Activated CD4-positive, alpha-beta memory T cell treated with anti-CD3 and anti-CD28 coated beads for 36 hours (primary cell): ENCODE measurements at regions of chr9 and their contacts with region 1.

Region 1: GRCh38 chr9:124708633-124709291 is 62.3 kb downstream of the NR6A1 start:
- DNase-seq: no peak
- H3K4me3 Mint-ChIP-seq: no peak overlapping the region
- H3K27ac Mint-ChIP-seq: no peak overlapping the region
- H3K4me1 Mint-ChIP-seq: no peaks in the 10 kb centered on the region
- H3K27me3 Mint-ChIP-seq: peaks cover 11% of the 10 kb centered on the region

Region 2: GRCh38 chr9:124420991-124421543 is 287.7 kb before region 1 on chr9:
- CTCF ChIA-PET with region 1: interaction called, 3 read pairs
- POLR2A ChIA-PET with region 1: no interaction called
- intact Hi-C with region 1: loop called (anchors 1 kb)
- DNase-seq: no peak
- H3K4me3 Mint-ChIP-seq: no peak overlapping the region
- H3K27ac Mint-ChIP-seq: no peak overlapping the region
- H3K4me1 Mint-ChIP-seq: peaks cover 2% of the 10 kb centered on the region
- H3K27me3 Mint-ChIP-seq: no peaks in the 10 kb centered on the region

Region 3: DNA sequence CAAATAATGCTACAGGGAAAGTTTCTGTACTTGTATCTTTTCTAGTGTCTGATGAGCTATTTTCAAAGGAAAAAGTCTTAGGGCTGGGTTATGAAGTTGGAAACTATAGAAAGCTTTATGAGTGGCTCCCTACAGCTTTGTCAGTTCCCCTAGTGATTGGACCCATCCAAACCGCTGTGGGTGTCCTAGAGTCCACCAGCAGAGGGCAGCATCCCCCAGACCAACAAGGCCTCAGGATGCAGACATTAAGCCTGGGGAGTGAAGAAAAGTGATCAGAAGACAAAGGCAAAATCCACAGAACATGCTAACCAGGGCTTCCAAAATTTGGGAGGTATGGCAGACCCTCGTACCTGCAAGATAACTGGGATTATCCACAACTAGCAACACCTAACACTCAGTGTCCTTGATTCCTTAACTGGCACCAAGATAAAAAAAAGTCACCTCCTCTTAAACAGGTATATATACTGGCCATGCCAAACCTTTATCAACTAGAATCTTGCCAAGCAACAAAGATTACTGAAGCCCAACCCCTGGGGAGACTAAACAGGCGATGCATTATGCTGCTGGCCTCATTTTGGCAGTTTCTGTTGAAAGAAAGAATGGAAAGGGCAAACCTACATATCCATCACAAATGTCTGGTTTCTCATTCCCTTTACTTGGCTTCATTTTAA is 91.2 kb before region 1 on chr9:
- CTCF ChIA-PET with region 1: interaction called, 83 read pairs
- POLR2A ChIA-PET with region 1: no interaction called
- intact Hi-C with region 1: loop called (anchors 1 kb)
- DNase-seq: peak; percentile 82
- H3K4me3 Mint-ChIP-seq: no peak overlapping the region
- H3K27ac Mint-ChIP-seq: no peak overlapping the region
- H3K4me1 Mint-ChIP-seq: no peaks in the 10 kb centered on the region
- H3K27me3 Mint-ChIP-seq: peaks cover 4% of the 10 kb centered on the region

Region 4: GRCh38 chr9:124743686-124744348 is 35.1 kb after region 1 on chr9:
- CTCF ChIA-PET with region 1: interaction called, 11 read pairs
- POLR2A ChIA-PET with region 1: no interaction called
- intact Hi-C with region 1: no loop called
- DNase-seq: no peak
- H3K4me3 Mint-ChIP-seq: no peak overlapping the region
- H3K27ac Mint-ChIP-seq: no peak overlapping the region
- H3K4me1 Mint-ChIP-seq: peaks cover 5% of the 10 kb centered on the region
- H3K27me3 Mint-ChIP-seq: peaks cover 10% of the 10 kb centered on the region

Region 5: DNA sequence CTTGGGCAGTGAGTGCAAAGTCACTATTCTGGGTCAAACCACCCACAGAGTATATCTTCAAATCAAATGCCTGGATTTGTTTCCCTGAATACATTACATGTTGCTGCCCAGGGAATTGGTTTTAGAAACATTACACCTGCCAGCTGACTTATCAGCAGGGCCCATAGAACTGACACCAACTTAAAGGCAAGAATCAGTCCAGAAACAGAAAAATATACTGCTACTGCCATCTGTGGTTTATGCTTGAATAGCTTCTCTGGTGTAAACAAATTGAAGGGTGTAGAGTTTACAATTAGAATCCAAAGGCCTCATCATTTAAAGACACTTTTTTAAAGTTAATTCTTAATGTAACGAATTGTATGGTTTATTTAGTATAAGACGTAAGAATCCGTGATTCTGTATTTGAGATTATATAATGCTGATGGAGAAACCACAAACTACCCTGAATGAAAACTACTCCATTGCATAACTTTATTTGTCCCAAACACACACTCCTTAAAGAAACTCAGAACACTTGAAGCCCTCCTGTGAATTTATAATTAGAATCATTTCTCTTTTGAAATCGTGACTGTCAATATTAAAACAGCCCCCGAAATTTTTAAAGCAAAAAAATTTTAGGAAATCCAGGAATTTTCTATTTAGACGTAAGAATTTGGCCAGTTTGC is 56.1 kb after region 1 on chr9:
- CTCF ChIA-PET with region 1: interaction called, 12 read pairs
- POLR2A ChIA-PET with region 1: no interaction called
- intact Hi-C with region 1: no loop called
- DNase-seq: no peak
- H3K4me3 Mint-ChIP-seq: no peak overlapping the region
- H3K27ac Mint-ChIP-seq: no peak overlapping the region
- H3K4me1 Mint-ChIP-seq: peaks cover 11% of the 10 kb centered on the region
- H3K27me3 Mint-ChIP-seq: peaks cover 69% of the 10 kb centered on the region

Region 6: GRCh38 chr9:124784509-124784908 is 75.7 kb after region 1 on chr9:
- CTCF ChIA-PET with region 1: no interaction called
- POLR2A ChIA-PET with region 1: no interaction called
- intact Hi-C with region 1: no loop called
- DNase-seq: no peak
- H3K4me3 Mint-ChIP-seq: no peak overlapping the region
- H3K27ac Mint-ChIP-seq: no peak overlapping the region
- H3K4me1 Mint-ChIP-seq: no peaks in the 10 kb centered on the region
- H3K27me3 Mint-ChIP-seq: no peaks in the 10 kb centered on the region